GM23248 (cell line): ENCODE measurements at regions of chr2 and their contacts with region 1.

Region 1: DNA sequence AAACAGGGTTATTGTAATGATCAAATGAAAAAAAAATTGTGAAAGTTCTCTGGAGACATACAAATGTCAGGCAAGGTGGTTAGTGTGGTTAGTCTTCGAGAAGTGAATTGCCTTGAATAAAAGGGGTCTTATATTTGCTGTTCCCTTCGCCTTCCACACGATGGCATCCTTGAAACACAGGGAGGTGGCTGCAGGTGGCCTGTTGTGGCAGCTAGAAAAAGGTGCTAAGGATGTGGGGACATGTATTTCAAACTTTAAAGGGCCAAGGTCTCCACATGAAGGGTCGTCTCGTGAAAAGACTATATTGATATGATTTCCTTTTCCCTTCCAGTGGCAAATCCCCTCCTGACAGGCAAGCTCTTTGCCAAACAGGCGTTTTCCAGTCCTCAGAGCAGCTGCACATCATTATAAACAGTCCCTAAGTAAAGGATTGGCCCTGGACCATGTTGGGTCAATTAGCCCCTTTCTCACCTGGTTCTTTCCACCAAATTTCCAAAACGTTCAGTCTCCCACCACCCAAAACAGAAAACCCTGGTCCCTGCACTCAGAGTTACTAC is 68.5 kb downstream of the COPS8 start:
- DNase-seq: peak; percentile 65
- H3K4me3 ChIP-seq: no peak overlapping the region
- H3K27ac ChIP-seq: no peak overlapping the region
- H3K4me1 ChIP-seq: peaks cover 33% of the 10 kb centered on the region
- H3K27me3 ChIP-seq: no peaks in the 10 kb centered on the region

Region 2: DNA sequence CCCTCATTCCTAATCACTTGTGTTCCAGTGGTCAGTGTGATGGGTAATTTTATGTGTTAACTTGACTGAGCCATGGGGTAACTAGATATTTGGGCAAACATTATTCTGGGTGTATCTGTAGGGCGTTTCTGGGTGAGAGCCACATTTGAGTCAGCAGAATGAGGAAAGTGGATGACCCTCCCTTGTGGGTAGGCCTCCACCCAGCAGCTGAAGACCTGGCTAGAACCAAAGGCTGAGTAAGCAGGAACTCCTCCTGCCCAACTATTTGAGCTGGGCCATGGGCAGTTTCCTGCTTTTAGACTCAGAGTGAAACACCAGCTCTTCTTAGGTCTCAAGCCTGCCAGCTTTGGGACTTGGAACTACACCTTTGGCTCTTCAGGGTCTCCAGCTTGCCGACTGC is 442.7 kb before region 1 on chr2:
- in situ Hi-C with region 1: no loop called
- DNase-seq: peak; percentile 93
- H3K4me3 ChIP-seq: no peak overlapping the region
- H3K27ac ChIP-seq: peak overlapping the region; percentile 61
- H3K4me1 ChIP-seq: peaks cover 17% of the 10 kb centered on the region
- H3K27me3 ChIP-seq: peaks cover 5% of the 10 kb centered on the region; the same call in 1 of the 2 replicates

Region 3: GRCh38 chr2:237572021-237572741 is 418.0 kb after region 1 on chr2:
- in situ Hi-C with region 1: loop called (anchors 25 kb)
- DNase-seq: peak; percentile 98
- H3K4me3 ChIP-seq: peak overlapping the region; percentile 59
- H3K27ac ChIP-seq: no peak overlapping the region
- H3K4me1 ChIP-seq: peaks cover 6% of the 10 kb centered on the region
- H3K27me3 ChIP-seq: no peaks in the 10 kb centered on the region